GM12878 (cell line): ENCODE measurements at regions of chr2 and their contacts with region 1.

Region 1: DNA sequence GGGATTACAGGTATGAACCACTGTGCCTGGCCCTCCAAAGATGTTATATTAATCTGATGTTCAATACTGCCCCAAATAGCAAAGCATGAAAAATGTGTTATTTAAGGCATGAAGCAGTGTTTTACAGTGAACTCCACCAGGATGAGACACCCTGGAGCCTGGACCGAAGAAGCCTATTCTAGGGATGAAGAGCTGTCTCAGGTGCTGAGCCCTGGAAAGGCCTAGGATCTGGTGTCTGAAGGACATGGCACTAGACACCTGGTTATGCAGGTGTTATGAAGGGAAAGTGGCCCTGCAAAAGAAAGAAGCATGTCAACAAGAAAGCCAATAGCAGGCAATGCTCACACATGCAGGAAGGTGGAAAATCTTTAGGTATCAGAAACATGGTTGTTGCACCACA is 374.4 kb downstream of the CLIP4 start:
- DNase-seq: no peak
- ATAC-seq: no peak
- H3K4me3 ChIP-seq: no peak overlapping the region
- H3K27ac ChIP-seq: no peak overlapping the region
- H3K4me1 ChIP-seq: no peaks in the 10 kb centered on the region
- H3K27me3 ChIP-seq: no peaks in the 10 kb centered on the region; a peak in 1 of 4 replicates
- CTCF ChIP-seq: no peak
- EP300 ChIP-seq: no peak
- POLR2A ChIP-seq: no peak
- RAD21 ChIP-seq: no peak

Region 2: GRCh38 chr2:29443627-29444026 is 45.9 kb before region 1 on chr2:
- CTCF ChIA-PET with region 1: no interaction called
- POLR2A ChIA-PET with region 1: no interaction called
- RAD21 ChIA-PET with region 1: no interaction called
- SMC1A ChIA-PET with region 1: no interaction called
- in situ Hi-C with region 1: no loop called
- intact Hi-C with region 1: no loop called
- DNase-seq: no peak
- ATAC-seq: no peak
- H3K4me3 ChIP-seq: no peak overlapping the region
- H3K27ac ChIP-seq: no peak overlapping the region
- H3K4me1 ChIP-seq: no peaks in the 10 kb centered on the region; the same call in 1 of the 2 replicates
- H3K27me3 ChIP-seq: no peaks in the 10 kb centered on the region
- CTCF ChIP-seq: no peak
- EP300 ChIP-seq: no peak
- POLR2A ChIP-seq: no peak
- RAD21 ChIP-seq: no peak

Region 3: DNA sequence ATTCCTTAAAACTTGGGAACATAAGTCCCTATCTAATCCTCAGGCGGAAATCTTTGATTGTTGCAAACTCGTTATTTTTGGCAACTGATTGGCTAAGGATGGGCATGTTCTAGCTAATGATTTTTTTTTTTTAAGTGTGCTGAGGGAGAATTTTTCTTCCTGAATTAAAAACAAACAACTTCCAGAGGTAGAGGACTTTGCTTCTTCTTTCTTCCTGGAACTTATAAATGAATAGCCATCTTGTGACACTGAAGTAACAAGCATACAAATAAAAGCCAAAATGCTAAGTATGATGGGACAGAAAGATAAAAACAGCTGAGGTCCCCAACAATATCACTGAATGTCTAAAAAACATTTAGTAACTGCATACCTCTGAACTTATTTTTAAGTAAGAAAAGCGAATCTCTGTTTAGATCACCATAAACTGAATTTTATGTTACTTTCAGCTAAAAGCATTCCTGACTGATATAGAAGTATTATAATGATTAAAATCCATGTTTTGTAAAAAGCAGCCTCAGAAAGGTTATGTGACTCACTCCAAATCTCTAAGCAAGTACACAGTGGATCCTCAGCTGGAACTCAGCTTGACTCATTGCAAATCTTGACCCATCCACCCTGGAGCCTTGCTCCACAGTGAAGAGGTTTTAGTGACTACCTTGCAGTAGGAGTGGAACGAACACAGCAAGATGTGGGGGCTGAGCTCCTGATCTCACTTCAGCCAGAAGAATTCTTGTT is 30.0 kb before region 1 on chr2:
- CTCF ChIA-PET with region 1: no interaction called
- POLR2A ChIA-PET with region 1: no interaction called
- RAD21 ChIA-PET with region 1: no interaction called
- SMC1A ChIA-PET with region 1: no interaction called
- in situ Hi-C with region 1: no loop called
- intact Hi-C with region 1: no loop called
- DNase-seq: no peak
- ATAC-seq: no peak
- H3K4me3 ChIP-seq: no peak overlapping the region
- H3K27ac ChIP-seq: no peak overlapping the region
- H3K4me1 ChIP-seq: no peaks in the 10 kb centered on the region
- H3K27me3 ChIP-seq: peaks cover 2 to 3% of the 10 kb centered on the region in 2 experiments; a peak in 3 of 4 replicates
- CTCF ChIP-seq: no peak
- EP300 ChIP-seq: no peak
- POLR2A ChIP-seq: no peak
- RAD21 ChIP-seq: no peak

Region 4: DNA sequence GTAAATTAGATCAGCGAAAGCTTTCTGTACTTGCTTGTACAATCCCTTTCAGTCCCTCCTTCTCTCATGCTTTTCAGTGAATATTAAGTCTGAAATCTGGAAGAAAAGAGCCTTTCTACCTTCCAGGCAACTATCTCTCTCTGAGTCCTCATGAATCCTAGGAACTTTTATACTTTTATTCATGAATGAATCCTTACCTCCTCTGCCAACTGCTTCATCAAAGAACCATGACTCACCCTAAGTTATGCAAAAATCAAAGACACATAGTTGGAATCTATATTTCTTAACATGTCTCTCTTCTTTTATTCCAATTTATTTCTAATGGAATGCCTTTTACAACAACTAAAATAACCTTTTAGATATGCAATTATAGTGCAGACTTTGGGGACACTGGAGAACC is 19.8 kb after region 1 on chr2:
- CTCF ChIA-PET with region 1: no interaction called
- POLR2A ChIA-PET with region 1: no interaction called
- RAD21 ChIA-PET with region 1: no interaction called
- SMC1A ChIA-PET with region 1: no interaction called
- in situ Hi-C with region 1: no loop called
- intact Hi-C with region 1: loop called (anchors 1 kb)
- DNase-seq: no peak
- ATAC-seq: no peak
- H3K4me3 ChIP-seq: no peak overlapping the region
- H3K27ac ChIP-seq: no peak overlapping the region
- H3K4me1 ChIP-seq: no peaks in the 10 kb centered on the region
- H3K27me3 ChIP-seq: no peaks in the 10 kb centered on the region
- CTCF ChIP-seq: no peak
- EP300 ChIP-seq: no peak
- POLR2A ChIP-seq: no peak
- RAD21 ChIP-seq: no peak

Region 5: DNA sequence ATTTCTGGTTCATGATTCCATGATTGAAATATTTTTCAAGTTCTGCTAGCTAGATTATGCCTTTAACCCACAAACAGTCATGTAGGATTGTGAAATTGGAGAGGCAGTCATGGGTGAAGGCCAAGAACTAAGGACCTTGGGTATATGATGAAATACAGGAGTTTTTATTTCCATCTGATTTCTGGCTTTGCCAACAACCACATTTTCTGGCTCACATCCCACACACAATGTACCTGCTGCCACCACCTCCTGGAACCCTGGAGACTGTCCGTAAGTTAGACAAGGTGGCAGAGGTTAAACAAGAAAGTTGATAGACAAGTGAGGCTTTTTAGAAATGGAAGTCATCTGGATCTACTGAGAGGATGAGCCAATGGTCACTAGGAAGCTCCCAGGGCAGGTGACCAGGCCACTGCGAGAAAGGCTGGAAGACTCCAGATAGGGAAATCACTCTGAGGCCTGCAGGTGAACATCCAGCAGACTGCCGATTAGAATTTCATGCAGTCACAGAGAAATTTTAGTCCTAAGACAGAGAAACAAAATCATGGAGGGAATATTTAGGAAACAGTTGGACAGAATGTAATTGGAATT is 29.9 kb after region 1 on chr2:
- CTCF ChIA-PET with region 1: no interaction called
- POLR2A ChIA-PET with region 1: no interaction called
- RAD21 ChIA-PET with region 1: no interaction called
- SMC1A ChIA-PET with region 1: no interaction called
- in situ Hi-C with region 1: no loop called
- intact Hi-C with region 1: no loop called
- DNase-seq: no peak
- ATAC-seq: no peak
- H3K4me3 ChIP-seq: no peak overlapping the region
- H3K27ac ChIP-seq: no peak overlapping the region
- H3K4me1 ChIP-seq: no peaks in the 10 kb centered on the region
- H3K27me3 ChIP-seq: peaks cover 0 to 3% of the 10 kb centered on the region in 2 experiments; a peak in 1 of 4 replicates
- CTCF ChIP-seq: no peak
- EP300 ChIP-seq: no peak
- POLR2A ChIP-seq: no peak
- RAD21 ChIP-seq: no peak